Right ventricle myocardium inferior (tissue), 1 donor: ENCODE measurements at regions of chr17 and their contacts with region 1.

Region 1: DNA sequence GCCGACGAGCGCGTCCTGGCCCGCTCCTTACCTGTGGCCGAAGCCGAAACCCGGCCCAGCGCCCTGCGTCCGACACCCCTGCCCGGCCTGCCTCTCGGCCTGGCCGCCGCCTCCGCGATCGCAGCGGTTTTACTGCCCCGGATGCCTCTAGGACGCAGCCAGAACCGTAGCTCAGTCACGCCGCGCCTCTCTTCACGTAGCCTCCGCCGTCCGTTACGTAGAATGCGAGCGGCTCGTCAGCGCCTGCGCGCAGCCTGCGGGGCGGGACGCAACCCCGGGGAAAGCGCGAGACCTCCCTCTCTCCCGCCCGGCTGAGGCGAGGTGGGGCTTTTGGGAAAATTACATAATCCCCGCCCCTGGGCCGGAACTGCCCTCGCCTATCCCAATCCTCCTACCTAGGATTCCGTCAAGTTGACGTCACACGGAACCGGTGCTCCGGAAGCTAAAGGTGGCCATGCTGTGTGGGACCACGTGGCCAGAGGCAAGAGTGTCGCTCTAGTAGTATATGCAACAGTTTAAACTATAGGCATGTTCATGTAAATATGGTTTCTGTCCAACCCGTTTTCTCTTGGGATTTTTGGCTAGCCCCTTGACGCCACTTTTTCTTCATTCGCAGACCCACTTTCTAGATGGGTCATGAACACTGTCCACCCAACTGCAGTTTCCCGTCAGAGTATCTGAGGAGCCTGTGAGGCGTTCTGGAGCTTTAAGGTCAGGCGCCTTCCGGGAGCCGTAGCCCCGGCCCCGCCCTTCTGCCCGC is at the start of gene CCDC47:
- DNase-seq: peak; percentile 98
- ATAC-seq: peak; percentile 97
- total RNA-seq, gene CCDC47: 90.5 TPM

Region 2: DNA sequence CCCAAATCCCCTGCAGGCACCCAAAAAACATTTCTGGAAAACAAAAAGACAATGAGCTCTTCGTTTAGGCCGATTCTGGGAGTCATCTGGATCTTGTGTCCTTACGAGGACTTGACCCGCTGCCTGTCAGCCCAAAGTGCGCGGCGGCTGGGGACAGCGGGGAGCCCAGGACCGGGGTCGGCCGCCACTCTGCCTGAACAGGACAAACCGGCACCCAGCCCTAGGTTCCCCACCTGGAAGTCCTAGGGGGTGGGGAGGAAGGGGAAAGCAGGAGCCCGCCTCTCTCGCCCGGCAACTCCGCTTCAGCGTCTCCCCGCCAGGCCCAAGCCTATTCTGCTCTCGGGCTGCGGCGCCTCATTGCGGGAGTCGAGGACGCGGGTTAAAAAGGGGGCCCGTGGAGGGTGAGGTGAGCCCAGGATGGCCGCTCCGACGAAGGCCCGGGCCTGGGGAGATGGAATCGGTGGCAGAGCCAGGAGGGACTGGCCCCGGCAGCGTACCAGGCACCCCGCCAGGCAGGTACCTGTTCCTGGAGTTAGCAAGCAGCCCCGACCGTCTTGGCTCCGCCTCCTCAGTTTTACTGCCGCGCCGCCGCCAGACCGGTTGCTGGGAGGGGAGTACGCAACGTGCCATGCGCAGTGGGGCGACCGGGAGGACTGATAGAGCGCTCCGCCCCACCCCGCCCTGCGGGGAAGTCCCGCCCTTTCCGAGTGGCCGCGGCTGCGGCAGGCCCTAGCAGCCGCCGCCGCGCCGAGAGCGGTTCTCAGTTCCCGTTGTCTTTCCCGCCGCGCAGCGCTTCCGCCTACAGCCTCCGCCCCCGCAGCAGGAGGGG is 32.1 kb before region 1 on chr17 and contains the start of gene STRADA:
- intact Hi-C with region 1: loop called (anchors 1 kb)
- DNase-seq: peak; percentile 100
- ATAC-seq: peak; percentile 100
- total RNA-seq, gene STRADA: 13.3 TPM

Region 3: DNA sequence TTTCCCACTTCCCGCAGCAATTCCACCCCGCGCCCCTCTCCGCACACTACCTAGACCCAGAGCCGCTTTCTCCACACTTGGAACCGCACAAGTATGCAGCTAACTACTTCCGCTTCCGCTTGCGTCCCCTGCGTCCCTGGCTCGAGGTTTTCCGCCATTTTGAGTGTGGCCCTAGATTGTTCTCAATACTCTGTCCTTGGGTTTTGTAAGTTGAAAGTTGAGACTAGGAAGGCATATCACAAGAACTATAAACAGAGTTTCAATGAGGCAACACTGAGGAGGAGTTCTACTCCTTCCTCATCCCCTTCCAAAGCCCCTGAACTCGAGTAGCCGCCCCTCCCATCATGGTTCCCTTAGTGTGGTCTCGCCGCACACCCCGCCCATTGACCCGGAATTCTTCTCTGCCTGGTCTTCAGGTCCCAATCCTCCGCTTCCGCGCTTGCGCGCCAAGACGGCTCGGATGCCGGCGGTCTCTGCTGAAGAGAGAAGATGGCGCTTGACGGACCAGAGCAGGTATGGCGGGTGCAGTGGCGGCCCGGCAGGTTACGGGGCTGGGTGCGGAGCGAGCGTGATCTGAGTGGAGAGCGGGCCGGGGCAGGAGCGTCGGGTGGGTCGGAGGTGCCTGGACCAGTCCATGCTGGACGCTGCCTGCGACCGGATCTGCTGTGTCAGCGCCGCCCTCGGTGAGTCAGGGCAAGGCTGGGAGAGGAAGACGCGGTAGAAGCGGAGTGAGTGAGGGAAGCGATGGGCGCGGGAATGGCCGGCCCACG is 53.6 kb after region 1 on chr17 and contains the starts of genes FTSJ3 and PSMC5:
- intact Hi-C with region 1: loop called (anchors 1 kb)
- DNase-seq: peak; percentile 98
- ATAC-seq: peak; percentile 94
- total RNA-seq, gene FTSJ3: 34.2 TPM
- total RNA-seq, gene PSMC5: 145 TPM